Activated CD4-positive, alpha-beta memory T cell treated with anti-CD3 and anti-CD28 coated beads for 36 hours (primary cell): ENCODE measurements at regions of chr12 and their contacts with region 1.

Region 1: GRCh38 chr12:51980051-51980808 is 26.5 kb upstream of the TAMALIN start:
- DNase-seq: peak; percentile 79
- H3K4me3 Mint-ChIP-seq: no peak overlapping the region
- H3K27ac Mint-ChIP-seq: peak overlapping the region; percentile 57
- H3K4me1 Mint-ChIP-seq: peaks cover 34% of the 10 kb centered on the region
- H3K27me3 Mint-ChIP-seq: no peaks in the 10 kb centered on the region

Region 2: DNA sequence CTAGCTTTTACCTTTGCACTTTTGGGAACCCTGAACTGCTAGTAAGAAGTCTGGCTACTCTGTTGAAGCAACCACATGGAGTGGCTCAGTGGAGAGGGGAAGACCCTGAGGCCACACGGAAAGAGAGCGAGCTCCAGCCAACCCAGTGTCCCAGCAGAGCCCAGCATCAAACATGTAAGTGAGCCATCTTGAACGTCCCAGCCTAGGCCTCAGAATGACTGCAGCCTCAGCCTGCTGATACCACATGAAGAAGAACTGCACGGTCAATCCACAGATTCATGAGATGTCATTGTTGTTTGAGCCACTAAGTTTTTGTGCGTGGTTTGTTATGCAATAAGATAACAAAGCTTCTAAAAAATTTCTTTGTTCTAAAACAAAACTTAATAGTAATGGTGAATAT is 847.5 kb before region 1 on chr12:
- CTCF ChIA-PET with region 1: no interaction called
- POLR2A ChIA-PET with region 1: no interaction called
- intact Hi-C with region 1: no loop called
- DNase-seq: no peak
- H3K4me3 Mint-ChIP-seq: no peak overlapping the region
- H3K27ac Mint-ChIP-seq: no peak overlapping the region
- H3K4me1 Mint-ChIP-seq: peaks cover 4% of the 10 kb centered on the region
- H3K27me3 Mint-ChIP-seq: no peaks in the 10 kb centered on the region

Region 3: GRCh38 chr12:51994959-51995358 is 14.7 kb after region 1 on chr12:
- CTCF ChIA-PET with region 1: interaction called, 15 read pairs
- POLR2A ChIA-PET with region 1: no interaction called
- intact Hi-C with region 1: no loop called
- DNase-seq: no peak
- H3K4me3 Mint-ChIP-seq: no peak overlapping the region
- H3K27ac Mint-ChIP-seq: no peak overlapping the region
- H3K4me1 Mint-ChIP-seq: peaks cover 7% of the 10 kb centered on the region
- H3K27me3 Mint-ChIP-seq: no peaks in the 10 kb centered on the region

Region 4: DNA sequence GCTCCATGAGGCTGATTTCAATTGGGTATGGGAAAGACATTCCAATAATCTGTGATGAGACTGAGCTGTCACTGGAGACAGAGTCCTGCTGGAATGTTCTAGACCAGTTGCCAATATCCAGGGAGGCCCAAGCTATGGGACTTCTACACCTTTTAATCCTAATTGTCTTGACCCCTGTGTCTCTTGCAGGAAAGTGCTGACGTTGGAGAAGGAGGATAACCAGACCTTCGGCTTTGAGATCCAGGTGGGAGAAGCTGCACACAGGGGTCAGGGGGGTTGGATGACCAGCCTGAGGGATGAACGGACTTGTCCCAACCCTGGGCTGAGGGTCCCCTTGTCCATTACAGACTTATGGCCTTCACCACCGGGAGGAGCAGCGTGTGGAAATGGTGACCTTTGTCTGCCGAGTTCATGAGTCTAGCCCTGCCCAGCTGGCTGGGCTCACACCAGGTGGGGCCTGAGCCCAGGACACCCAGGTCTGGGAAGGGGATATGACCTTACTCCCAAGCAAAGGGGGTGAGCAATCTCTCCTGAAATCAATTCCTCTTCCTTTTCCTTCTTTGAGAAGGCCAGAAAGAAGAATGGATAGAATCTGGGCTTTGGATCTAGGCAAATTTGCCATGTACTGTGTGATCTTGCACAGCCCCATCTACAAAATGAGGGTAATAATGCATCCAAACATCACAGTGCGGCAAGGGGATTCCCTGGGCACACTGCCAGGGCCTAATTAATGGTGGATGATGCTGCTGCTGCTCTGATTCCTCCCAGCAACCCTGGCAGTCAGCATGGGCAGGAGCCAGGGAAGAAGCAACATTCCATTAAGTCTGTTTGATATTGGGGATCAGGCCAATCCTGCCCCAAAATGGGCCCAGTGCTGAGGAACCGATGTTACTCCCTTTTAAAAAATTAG is 30.7 kb after region 1 on chr12:
- CTCF ChIA-PET with region 1: no interaction called
- POLR2A ChIA-PET with region 1: no interaction called
- intact Hi-C with region 1: no loop called
- DNase-seq: no peak
- H3K4me3 Mint-ChIP-seq: no peak overlapping the region
- H3K27ac Mint-ChIP-seq: no peak overlapping the region
- H3K4me1 Mint-ChIP-seq: peaks cover 12% of the 10 kb centered on the region
- H3K27me3 Mint-ChIP-seq: peaks cover 2% of the 10 kb centered on the region